ENCODE measurements at regions of chr14 and their contacts with region 1.

Region 1: DNA sequence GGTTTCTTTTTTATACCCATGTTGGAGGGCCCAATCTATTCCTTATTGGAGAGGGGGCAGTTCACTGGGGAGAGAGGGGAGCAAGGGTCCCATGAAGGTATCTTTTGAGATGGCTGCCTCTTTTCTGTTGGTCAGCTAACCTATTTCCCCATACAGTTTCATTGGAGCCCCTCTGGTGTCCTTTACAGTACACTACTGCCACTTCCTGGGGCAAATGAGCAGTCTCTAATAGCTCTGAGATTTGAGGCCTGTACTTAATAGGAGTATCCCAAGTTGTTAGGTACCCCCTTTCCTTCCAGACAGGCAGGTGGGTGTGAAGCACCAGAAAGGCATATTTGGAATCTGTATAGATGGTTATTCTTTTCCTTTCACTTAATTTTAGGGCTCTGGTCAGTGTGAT is 41.3 kb upstream of the RNU6-8 start:
- DNase-seq: no peak
- ATAC-seq: peak in 3 of 4 donors; percentile 25 to 45 (median 37)
- H3K4me3 ChIP-seq: no peak overlapping the region
- H3K27ac ChIP-seq: no peak overlapping the region
- H3K4me1 ChIP-seq: no peaks in the 10 kb centered on the region
- H3K27me3 ChIP-seq: no peaks in the 10 kb centered on the region
- CTCF ChIP-seq: peak in 1 of 4 donors; percentile 5
- POLR2A ChIP-seq: no peak

Region 2: DNA sequence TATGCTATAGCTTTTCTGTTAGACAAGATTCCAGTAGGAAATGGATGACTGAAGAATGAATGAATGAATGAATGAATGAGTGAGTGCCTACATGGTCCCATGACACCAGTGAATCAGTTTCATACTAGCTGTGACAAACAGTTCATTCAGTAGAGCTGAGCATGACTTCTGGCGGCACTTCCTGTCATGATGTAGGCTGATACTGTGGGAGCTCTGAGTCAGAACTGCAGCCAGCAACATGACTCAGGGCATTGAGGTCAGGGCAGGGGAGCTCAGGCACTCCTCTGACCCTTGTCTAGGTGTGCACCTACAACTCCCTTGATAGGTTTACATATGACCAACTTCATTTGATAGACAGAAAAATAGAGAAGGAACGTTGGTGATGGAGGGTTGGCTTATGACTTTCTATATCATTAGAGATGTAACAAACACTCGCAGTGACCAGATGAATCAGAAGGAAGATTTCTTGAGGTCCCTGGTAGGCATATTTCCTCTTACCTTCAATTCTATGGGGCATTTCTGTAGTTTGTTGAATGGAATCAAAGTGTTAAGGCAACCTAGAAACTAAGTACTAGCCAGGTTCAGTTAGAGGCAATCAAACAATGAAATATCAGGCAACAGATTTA is 306.6 kb before region 1 on chr14:
- intact Hi-C with region 1: loop called in 1 of 2 experiments (anchors 10 kb)
- DNase-seq: peak in 1 of 3 donors; percentile 72
- ATAC-seq: peak; percentile 61 to 96 (median 80)
- H3K4me3 ChIP-seq: no peak overlapping the region
- H3K27ac ChIP-seq: no peak overlapping the region
- H3K4me1 ChIP-seq: peaks cover 0 to 5% (median 0%) of the 10 kb centered on the region in 4 donors
- H3K27me3 ChIP-seq: no peaks in the 10 kb centered on the region
- CTCF ChIP-seq: no peak
- POLR2A ChIP-seq: no peak

Region 3: GRCh38 chr14:32059702-32060101 is 184.7 kb before region 1 on chr14:
- intact Hi-C with region 1: no loop called
- DNase-seq: no peak
- ATAC-seq: no peak
- H3K4me3 ChIP-seq: no peak overlapping the region
- H3K27ac ChIP-seq: no peak overlapping the region
- H3K4me1 ChIP-seq: no peaks in the 10 kb centered on the region
- H3K27me3 ChIP-seq: no peaks in the 10 kb centered on the region
- CTCF ChIP-seq: no peak
- POLR2A ChIP-seq: no peak

Region 4: DNA sequence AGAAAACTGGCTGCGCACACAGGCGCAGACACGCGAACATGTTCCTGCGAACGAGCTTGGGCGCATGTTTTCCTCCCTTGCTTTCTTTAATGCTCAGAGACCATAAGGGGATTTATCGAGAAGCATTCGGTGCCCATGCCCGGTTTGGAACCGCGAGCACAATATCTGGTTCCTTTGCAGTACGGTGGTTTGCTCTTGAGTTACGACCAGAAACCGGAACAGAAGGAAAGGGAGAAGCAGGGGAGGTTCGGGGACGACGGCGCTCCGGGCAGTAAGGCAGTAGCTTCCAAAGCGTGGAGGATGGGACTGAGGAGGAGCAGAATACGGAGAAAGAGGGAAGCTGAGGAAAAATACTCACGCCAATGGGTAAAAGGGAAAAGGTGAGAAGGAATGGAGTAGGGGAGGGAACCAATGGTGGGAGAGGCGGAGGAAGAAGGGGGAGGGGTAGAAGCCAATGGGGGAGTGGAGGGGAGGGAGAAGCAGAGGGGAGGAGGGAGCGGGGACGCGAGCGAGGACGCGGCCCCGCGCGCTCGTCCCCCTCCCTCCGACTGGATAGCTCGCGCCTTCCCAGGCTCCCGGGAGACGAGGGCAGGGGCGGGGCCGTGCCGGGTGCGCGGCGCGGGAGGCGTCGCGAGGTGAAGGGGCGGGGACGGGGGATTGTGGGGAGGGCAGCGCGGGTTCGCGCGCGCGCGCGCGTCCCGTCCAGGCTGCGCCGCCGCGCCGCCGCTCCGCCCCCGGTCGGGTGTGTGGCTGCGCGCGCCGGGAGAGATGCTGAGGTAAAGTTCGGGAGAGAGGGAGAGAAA is 167.9 kb before region 1 on chr14:
- intact Hi-C with region 1: loop called in 1 of 2 experiments (anchors 10 kb)
- DNase-seq: peak; percentile 98 to 99 (median 98)
- ATAC-seq: peak; percentile 87 to 94 (median 90)
- H3K4me3 ChIP-seq: peak overlapping the region; percentile 65 to 81 (median 79)
- H3K27ac ChIP-seq: peak overlapping the region; percentile 94 to 98 (median 94)
- H3K4me1 ChIP-seq: peaks cover 0 to 24% (median 5%) of the 10 kb centered on the region in 4 donors
- H3K27me3 ChIP-seq: no peaks in the 10 kb centered on the region
- CTCF ChIP-seq: no peak
- POLR2A ChIP-seq: peak; percentile 53

Measured in right lobe of liver (tissue), 6 donors.